ENCODE measurements at regions of chr22 and their contacts with region 1.

Region 1: GRCh38 chr22:37676736-37677492 is 1.5 kb downstream of the LGALS1 start:
- DNase-seq: peak; percentile 97
- H3K4me3 Mint-ChIP-seq: peak overlapping the region; percentile 92
- H3K27ac Mint-ChIP-seq: peak overlapping the region; percentile 97
- H3K4me1 Mint-ChIP-seq: peaks cover 56% of the 10 kb centered on the region
- H3K27me3 Mint-ChIP-seq: no peaks in the 10 kb centered on the region

Region 2: DNA sequence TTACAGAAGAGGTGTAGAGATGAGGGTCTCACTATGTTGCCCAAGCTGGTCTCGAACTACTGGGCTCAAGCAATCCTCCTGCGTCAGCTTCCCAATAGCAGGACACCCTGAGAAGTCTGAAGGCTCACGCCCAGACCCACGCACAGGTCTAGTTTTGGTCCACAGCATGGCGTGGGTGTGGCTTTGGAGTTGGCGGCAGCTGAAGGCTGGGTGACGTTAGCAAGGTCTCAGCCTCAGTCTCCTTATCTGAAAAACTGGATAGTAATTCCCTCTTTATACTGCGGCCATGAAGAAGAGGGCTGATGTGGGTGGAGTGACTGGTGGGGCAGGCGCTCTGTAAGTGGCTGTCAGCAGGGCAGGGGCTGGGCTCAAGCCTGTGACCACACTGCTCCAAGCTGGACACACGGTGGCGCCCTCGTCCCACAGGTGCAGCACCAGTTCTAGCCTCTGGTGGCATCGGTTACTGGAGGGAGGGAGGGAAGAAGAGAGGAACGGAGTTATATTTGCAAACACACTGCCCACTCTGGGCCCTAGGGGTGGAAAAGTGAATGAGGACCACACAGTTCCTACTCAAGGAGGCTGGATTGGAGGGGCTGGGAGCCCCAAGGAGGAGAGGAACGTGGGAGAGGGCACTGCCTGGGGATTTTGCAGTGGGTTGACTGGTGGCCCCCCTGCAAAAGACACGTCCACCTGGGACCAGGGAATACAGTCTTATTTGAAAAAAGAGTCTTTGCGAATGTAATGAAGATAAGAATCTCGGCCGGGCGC is 138.1 kb before region 1 on chr22:
- intact Hi-C with region 1: loop called (anchors 5 kb)
- DNase-seq: peak; percentile 96
- H3K4me3 Mint-ChIP-seq: peak overlapping the region; percentile 5
- H3K27ac Mint-ChIP-seq: peak overlapping the region; percentile 12
- H3K4me1 Mint-ChIP-seq: peaks cover 37% of the 10 kb centered on the region
- H3K27me3 Mint-ChIP-seq: peaks cover 9% of the 10 kb centered on the region

Region 3: DNA sequence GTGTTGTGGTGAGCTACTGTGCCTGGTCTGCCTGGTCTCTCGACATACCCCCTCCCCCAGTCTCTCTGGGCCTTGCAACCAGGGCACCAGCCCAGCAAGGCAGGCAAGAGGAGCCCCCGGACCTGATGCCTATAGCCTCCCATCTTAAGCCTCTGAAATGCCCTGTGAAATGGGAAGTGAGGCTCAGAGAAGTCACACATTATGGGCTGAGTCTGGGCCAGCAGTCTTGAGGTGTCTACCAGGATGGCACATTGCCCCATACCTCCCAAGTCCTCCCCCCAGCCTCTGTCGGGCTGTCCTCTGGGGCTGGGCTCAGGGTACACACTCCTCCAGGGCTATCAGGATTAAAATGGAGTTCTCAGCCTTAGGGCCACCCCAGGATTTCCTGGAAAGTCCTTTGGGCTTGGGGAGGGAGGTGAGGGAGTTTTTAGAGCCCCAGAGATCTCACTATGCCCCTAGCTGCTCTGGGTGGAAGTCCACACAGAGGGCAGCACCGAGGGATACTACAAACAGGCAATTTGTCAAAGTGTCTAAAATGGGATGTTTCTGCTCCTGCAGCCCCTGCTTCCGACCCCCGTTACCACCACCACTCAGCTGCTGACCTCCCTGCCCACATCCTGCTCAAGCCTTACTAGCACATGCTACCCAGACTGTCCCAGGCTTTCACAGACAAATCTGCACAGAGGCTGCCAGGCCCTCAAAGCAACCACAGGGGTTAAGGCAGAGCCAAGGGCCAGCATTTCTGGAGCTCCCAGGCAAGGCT is 40.5 kb before region 1 on chr22:
- intact Hi-C with region 1: loop called (anchors 1 kb)
- DNase-seq: peak; percentile 79
- H3K4me3 Mint-ChIP-seq: peak overlapping the region; percentile 17
- H3K27ac Mint-ChIP-seq: peak overlapping the region; percentile 80
- H3K4me1 Mint-ChIP-seq: peaks cover 61% of the 10 kb centered on the region
- H3K27me3 Mint-ChIP-seq: no peaks in the 10 kb centered on the region

Region 4: GRCh38 chr22:37658133-37659065 is 18.5 kb before region 1 on chr22 and contains the start of gene PDXP:
- intact Hi-C with region 1: loop called (anchors 1 kb)
- DNase-seq: peak; percentile 100
- H3K4me3 Mint-ChIP-seq: peak within 1 kb of the TSS; percentile 94
- H3K27ac Mint-ChIP-seq: peak within 1 kb of the TSS; percentile 91
- H3K4me1 Mint-ChIP-seq: peaks cover 35% of the 10 kb centered on the region
- H3K27me3 Mint-ChIP-seq: no peaks in the 10 kb centered on the region
- total RNA-seq, gene PDXP: 49.3 and 51.2 TPM in 2 replicates

Region 5: GRCh38 chr22:37696657-37697537 is 20.0 kb after region 1 on chr22 and contains the start of gene TRIOBP:
- intact Hi-C with region 1: no loop called
- DNase-seq: peak; percentile 97
- H3K4me3 Mint-ChIP-seq: peak within 1 kb of the TSS; percentile 75
- H3K27ac Mint-ChIP-seq: peak within 1 kb of the TSS; percentile 58
- H3K4me1 Mint-ChIP-seq: peaks cover 13% of the 10 kb centered on the region
- H3K27me3 Mint-ChIP-seq: no peaks in the 10 kb centered on the region
- total RNA-seq, gene TRIOBP: 33.3 and 34.8 TPM in 2 replicates

Region 6: DNA sequence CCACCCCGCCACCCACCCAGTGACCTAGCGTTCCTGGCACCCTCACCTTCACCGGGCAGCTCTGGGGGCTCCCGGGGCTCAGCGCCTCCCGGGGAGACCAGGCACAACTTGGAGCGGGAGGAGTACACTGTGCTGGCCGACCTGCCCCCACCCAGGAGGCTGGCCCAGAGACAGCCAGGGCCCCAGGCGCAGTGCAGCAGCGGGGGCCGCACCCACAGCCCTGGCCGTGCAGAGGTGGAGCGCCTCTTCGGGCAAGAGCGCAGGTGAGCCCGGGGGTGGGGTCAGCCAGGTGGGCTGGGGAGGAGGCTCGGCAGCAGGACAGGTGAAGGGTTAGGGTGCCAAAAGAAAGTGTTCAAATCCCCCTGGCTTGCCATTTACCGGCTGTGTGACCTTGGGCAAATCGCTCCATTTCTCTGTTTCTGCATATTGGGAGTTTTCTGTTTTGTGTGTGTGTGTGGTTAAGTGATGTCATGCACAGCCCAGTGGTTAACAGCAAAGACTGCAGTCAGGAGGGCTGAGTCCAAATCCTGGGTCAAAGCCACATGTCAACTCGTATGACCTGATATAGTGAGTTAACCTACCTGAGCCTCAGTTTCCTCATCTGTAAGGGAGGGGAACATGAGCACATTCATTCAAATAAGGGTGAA is 49.5 kb after region 1 on chr22:
- intact Hi-C with region 1: no loop called
- DNase-seq: peak; percentile 62
- H3K4me3 Mint-ChIP-seq: no peak overlapping the region
- H3K27ac Mint-ChIP-seq: no peak overlapping the region
- H3K4me1 Mint-ChIP-seq: peaks cover 2% of the 10 kb centered on the region
- H3K27me3 Mint-ChIP-seq: no peaks in the 10 kb centered on the region

Region 7: DNA sequence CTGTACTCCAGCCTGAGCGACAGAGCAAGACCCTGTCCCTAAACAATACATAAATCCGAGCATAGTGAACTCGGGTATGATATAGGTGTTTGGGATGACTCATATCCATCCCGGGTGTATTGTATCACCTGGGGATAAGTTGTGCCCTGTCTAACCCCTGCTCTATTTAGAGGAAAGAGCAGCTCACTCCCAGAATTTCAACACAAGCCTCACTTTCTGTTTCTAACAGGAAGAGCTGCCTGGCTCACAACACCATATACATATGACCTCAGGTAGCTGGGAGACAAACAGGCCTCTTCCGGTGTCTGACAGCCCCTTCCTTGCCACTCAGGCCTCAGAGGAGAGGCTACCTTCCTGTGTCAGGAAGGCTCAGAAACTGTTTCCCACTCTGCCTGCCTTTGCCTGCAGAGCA is 219.3 kb after region 1 on chr22:
- intact Hi-C with region 1: no loop called
- DNase-seq: peak; percentile 89
- H3K4me3 Mint-ChIP-seq: peak overlapping the region; percentile 53
- H3K27ac Mint-ChIP-seq: peak overlapping the region; percentile 91
- H3K4me1 Mint-ChIP-seq: peaks cover 33% of the 10 kb centered on the region
- H3K27me3 Mint-ChIP-seq: no peaks in the 10 kb centered on the region

Measured in activated CD4-positive, alpha-beta T cell treated with anti-CD3 and anti-CD28 coated beads, Interleukin-2, amount 10 ng/mL, durations not matched to agents 24 days and 14 days (primary cell).